B cell (primary cell): ENCODE measurements at regions of chr22 and their contacts with region 1.

Region 1: DNA sequence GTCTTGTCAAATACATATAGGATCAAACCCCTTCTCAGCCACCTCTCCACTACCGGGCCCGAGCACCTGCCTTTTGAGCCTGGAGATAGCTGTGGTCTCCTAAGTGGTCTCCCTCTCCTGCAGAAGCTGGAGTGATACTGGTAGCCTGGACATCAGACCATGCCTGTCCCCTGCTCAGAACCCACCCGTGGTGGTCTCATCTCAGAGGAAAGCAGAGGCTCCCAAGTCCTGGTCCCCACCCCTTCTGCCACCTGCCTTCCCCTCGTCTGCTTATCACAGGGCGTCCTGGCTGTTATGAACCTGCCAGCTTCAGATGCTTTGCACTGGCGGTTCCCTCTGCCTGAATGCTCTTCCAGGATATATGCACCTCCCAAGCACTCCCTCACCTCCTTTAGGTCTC is 50.5 kb upstream of the EIF3D start:
- DNase-seq: no peak
- ATAC-seq: no peak
- H3K4me3 ChIP-seq: no peak overlapping the region
- H3K4me3 Mint-ChIP-seq: no peak overlapping the region
- H3K27ac ChIP-seq: no peak overlapping the region
- H3K27ac Mint-ChIP-seq: no peak overlapping the region
- H3K4me1 ChIP-seq: no peaks in the 10 kb centered on the region
- H3K4me1 Mint-ChIP-seq: no peaks in the 10 kb centered on the region
- H3K27me3 ChIP-seq: peaks cover 0 to 3% (median 0%) of the 10 kb centered on the region in 4 experiments
- H3K27me3 Mint-ChIP-seq: peaks cover 30% of the 10 kb centered on the region
- CTCF ChIP-seq: no peak

Region 2: DNA sequence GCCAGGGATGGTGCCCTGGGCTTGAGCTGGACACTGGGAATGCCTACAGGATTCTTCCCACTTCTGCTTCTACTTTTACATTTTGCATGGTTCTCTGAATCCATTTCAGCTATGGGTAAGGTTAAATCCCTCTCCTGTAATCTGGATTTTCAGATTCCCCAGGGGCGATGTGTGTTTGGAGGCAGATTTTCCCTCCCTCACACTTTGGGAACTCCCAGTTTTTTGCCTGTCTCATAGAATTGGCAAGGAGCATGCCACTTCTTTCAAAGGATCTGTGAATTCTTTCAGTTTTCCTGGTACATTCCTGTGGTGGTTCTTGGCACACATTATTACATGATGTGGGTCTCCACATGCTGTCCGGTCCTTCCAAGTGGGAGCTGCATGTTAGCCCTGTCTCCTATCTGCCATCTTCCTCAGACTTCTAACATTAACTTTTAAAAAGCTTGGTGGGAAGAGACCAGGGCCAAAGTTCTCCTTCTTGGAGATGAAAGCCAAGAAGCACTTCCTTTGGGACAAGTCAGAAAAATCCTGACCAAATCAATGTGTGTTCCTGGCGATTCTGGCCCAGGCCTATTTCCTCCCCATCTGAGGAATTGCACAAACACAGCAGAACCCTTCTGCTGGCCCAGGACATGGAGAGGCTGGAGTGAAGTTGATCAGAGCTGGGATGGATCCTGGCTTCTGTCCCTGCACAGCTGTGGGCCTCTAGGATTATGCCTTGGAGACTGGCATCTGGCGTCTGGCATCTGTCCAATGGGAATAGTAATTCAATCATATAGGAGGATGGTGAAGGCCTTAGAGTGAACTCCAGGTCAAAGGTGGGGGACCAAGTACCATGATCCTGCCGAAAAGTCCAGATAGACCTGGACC is 334.7 kb before region 1 on chr22:
- CTCF ChIA-PET with region 1: no interaction called
- POLR2A ChIA-PET with region 1: no interaction called
- intact Hi-C with region 1: no loop called
- DNase-seq: no peak
- ATAC-seq: no peak
- H3K4me3 ChIP-seq: no peak overlapping the region
- H3K4me3 Mint-ChIP-seq: no peak overlapping the region
- H3K27ac ChIP-seq: no peak overlapping the region
- H3K27ac Mint-ChIP-seq: no peak overlapping the region
- H3K4me1 ChIP-seq: peaks cover 3% of the 10 kb centered on the region in 2 donors
- H3K4me1 Mint-ChIP-seq: peaks cover 6% of the 10 kb centered on the region
- H3K27me3 ChIP-seq: no peaks in the 10 kb centered on the region
- H3K27me3 Mint-ChIP-seq: peaks cover 3% of the 10 kb centered on the region
- CTCF ChIP-seq: no peak

Region 3: DNA sequence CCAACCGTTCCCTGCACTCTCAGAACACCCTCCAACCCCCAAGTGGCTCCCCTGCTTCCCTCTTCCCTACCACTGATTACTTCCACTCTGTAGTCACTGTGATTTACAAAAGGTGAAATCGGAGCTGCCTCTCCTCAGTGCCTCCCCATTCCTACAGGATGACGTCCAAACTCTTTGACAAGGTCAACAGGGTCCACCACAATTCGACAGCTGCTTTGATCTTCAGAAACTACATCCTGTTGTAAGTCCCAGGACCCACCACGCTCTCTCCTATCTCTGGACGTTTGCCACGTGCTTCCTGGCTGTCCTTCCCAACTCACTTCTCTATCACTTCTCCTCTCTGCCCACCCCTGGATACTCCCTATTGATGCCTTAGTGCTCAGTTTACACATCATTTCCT is 34.5 kb after region 1 on chr22:
- CTCF ChIA-PET with region 1: no interaction called
- POLR2A ChIA-PET with region 1: no interaction called
- intact Hi-C with region 1: no loop called
- DNase-seq: no peak
- ATAC-seq: no peak
- H3K4me3 ChIP-seq: no peak overlapping the region
- H3K4me3 Mint-ChIP-seq: no peak overlapping the region
- H3K27ac ChIP-seq: no peak overlapping the region
- H3K27ac Mint-ChIP-seq: no peak overlapping the region
- H3K4me1 ChIP-seq: no peaks in the 10 kb centered on the region
- H3K4me1 Mint-ChIP-seq: no peaks in the 10 kb centered on the region
- H3K27me3 ChIP-seq: peaks cover 0 to 35% (median 10%) of the 10 kb centered on the region in 4 experiments
- H3K27me3 Mint-ChIP-seq: peaks cover 67% of the 10 kb centered on the region
- CTCF ChIP-seq: no peak

Region 4: DNA sequence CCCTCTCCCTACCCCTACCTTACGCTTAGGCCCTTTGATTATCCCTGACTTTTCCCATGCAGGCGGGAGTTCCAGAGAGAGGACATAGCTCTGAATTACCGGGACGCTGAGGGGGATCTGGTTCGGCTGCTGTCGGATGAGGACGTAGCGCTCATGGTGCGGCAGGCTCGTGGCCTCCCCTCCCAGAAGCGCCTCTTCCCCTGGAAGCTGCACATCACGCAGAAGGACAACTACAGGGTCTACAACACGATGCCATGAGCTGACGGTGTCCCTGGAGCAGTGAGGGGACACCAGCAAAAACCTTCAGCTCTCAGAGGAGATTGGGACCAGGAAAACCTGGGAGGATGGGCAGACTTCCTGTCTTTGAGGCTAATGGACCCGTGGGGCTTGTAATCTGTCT is 298.1 kb after region 1 on chr22:
- CTCF ChIA-PET with region 1: no interaction called
- POLR2A ChIA-PET with region 1: interaction called, 10 read pairs
- intact Hi-C with region 1: no loop called
- DNase-seq: no peak
- ATAC-seq: no peak
- H3K4me3 ChIP-seq: no peak overlapping the region
- H3K4me3 Mint-ChIP-seq: no peak overlapping the region
- H3K27ac ChIP-seq: no peak overlapping the region
- H3K27ac Mint-ChIP-seq: no peak overlapping the region
- H3K4me1 ChIP-seq: peaks cover 0 to 6% of the 10 kb centered on the region in 2 donors
- H3K4me1 Mint-ChIP-seq: peaks cover 6% of the 10 kb centered on the region
- H3K27me3 ChIP-seq: no peaks in the 10 kb centered on the region
- H3K27me3 Mint-ChIP-seq: no peaks in the 10 kb centered on the region
- CTCF ChIP-seq: no peak